PC-3 (cell line): ENCODE measurements at regions of chrX and their contacts with region 1.

Region 1: GRCh38 chrX:38754102-38754790 is 47.0 kb upstream of the MID1IP1 start:
- DNase-seq: peak; percentile 68
- ATAC-seq: peak; percentile 61
- H3K4me3 ChIP-seq: no peak overlapping the region
- H3K27ac ChIP-seq: no peak overlapping the region
- H3K4me1 ChIP-seq: no peaks in the 10 kb centered on the region
- H3K27me3 ChIP-seq: peaks cover 29% of the 10 kb centered on the region
- CTCF ChIP-seq: peak; percentile 78

Region 2: GRCh38 chrX:38859602-38860001 is 105.4 kb after region 1 on chrX:
- CTCF ChIA-PET with region 1: no interaction called
- POLR2A ChIA-PET with region 1: no interaction called
- intact Hi-C with region 1: no loop called
- DNase-seq: no peak
- ATAC-seq: no peak
- H3K4me3 ChIP-seq: no peak overlapping the region
- H3K27ac ChIP-seq: no peak overlapping the region
- H3K4me1 ChIP-seq: 0 out of 2 replicates have a peak, but pooled peaks cover 3% of the 10 kb centered on the region
- H3K27me3 ChIP-seq: no peaks in the 10 kb centered on the region
- CTCF ChIP-seq: no peak

Region 3: DNA sequence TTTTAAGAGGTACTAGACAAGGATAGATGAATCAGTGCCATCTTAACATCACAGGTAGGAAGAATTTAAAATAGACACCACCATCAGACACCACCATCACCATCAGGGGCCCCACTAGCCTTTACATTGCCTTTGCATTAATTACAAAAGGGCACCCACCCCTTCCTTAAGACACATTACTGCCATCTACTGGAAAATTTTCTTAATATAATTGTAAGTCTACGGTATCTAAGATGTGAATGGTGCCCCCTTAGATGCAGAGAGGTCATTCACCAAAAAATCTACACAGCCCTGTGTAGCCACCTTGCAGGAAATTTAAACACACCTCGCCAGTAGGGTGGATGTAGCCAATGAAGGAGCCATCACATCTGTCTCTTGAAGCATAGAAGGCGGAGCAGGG is 231.1 kb after region 1 on chrX:
- CTCF ChIA-PET with region 1: no interaction called
- POLR2A ChIA-PET with region 1: no interaction called
- intact Hi-C with region 1: loop called (anchors 5 kb)
- DNase-seq: peak; percentile 58
- ATAC-seq: peak; percentile 54
- H3K4me3 ChIP-seq: no peak overlapping the region
- H3K27ac ChIP-seq: no peak overlapping the region
- H3K4me1 ChIP-seq: peaks cover 18% of the 10 kb centered on the region
- H3K27me3 ChIP-seq: no peaks in the 10 kb centered on the region
- CTCF ChIP-seq: peak; percentile 60

Region 4: GRCh38 chrX:39175418-39176058 is 421.3 kb after region 1 on chrX:
- CTCF ChIA-PET with region 1: no interaction called
- POLR2A ChIA-PET with region 1: no interaction called
- intact Hi-C with region 1: no loop called
- DNase-seq: no peak
- ATAC-seq: no peak
- H3K4me3 ChIP-seq: no peak overlapping the region
- H3K27ac ChIP-seq: no peak overlapping the region
- H3K4me1 ChIP-seq: peaks cover 7% of the 10 kb centered on the region
- H3K27me3 ChIP-seq: no peaks in the 10 kb centered on the region
- CTCF ChIP-seq: no peak

Region 5: DNA sequence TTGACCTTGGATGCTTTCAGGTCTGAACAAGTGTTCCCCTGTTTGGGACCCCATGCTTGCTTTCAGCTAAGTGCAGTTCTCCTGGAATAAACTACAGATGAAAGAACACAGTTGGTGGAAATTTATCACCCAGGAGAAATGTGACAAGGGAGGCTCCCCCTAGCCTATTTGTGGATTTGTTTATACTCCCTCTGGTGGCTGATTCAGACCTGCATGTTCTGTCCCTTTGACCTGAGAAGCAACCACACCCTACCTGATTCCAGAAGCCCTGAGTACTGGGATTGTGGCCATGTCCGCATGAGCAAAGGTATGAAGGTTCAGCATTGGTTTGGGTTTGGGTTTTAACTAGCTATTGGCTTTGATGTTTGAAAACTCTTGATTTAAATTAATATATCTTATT is 487.9 kb after region 1 on chrX:
- CTCF ChIA-PET with region 1: no interaction called
- POLR2A ChIA-PET with region 1: no interaction called
- intact Hi-C with region 1: loop called (anchors 1 kb)
- DNase-seq: peak; percentile 59
- ATAC-seq: peak; percentile 27; the same call in 1 of the 2 replicates
- H3K4me3 ChIP-seq: no peak overlapping the region
- H3K27ac ChIP-seq: no peak overlapping the region
- H3K4me1 ChIP-seq: no peaks in the 10 kb centered on the region
- H3K27me3 ChIP-seq: no peaks in the 10 kb centered on the region
- CTCF ChIP-seq: peak; percentile 78